Dorsolateral prefrontal cortex (tissue), 120 donors: ENCODE measurements at regions of chr11 and their contacts with region 1.

Region 1: DNA sequence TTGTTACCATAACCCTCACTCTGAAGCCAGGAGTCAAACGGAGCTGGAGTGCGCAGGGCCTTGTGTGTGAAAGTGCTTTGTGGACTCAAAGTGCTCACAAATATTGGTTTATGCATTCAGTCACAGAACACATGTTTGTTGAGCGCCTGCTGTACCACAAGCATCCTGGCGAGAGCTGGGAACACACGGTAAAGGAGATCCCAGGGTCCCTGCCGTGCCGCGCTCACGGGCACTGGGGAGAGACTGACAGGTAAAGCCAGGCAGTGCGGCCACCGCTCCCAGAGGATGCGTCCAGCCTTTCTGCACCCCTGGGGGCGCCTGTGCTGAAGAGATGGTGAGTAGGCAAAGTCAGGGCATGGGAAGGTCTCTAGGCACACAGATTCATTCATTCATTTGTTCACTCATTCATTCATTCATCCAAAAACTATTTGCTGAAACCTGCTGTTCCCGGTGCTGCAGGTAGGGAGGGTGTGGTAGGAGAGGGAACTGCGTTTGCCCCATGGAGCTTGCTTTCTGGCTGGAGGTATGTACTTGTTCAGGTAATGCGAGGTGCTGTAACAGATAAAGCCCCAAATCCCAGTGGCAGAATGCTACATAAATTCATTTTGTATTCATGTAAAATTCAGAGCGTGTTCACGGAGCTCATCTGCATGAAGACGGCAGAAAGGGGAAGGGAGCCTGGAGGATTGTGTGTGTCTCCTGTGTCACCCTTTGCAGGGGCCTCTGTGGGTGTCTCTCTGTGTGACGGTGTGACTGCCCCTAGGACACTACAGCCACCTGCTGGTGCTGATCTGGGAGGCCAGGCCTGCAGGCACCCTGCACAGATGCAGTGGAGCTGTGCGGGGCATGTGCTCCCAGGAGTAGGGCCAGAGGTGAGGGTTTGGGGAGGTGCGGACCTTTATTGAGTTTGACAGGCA is 167.0 kb upstream of the B3GAT1 start:
- DNase-seq: no peak
- H3K4me3 ChIP-seq: no peak overlapping the region
- H3K27ac ChIP-seq: no peak overlapping the region
- H3K27me3 ChIP-seq: no peaks in the 10 kb centered on the region
- CTCF ChIP-seq: peak in 23 of 56 donors; percentile 9 to 48 (median 26)

Region 2: DNA sequence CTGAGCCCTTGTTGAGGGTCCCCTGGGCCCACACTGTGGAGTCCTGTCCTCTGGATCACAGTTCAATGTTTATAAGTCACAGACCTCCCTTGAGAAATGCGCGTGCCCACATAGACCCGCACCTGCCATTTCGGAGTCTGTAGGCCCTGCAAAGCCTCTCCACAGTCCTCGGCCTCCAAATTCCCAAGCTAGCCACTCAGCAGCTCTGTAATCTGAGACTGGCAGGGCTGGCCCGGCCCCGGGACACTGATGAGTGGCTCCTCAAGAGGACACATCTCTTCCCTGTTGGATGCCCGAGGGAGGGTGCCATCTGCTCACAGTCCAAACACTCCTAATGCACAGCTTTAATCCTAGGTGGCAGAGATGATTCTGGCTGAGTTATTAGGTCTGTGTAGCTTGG is 206.1 kb before region 1 on chr11:
- intact Hi-C with region 1: loop called in 1 of 2 experiments (anchors 5 kb)
- DNase-seq: peak in 7 of 10 donors; percentile 58 to 79 (median 63)
- H3K4me3 ChIP-seq: no peak overlapping the region
- H3K27ac ChIP-seq: peak overlapping the region in 37 of 59 donors; percentile 1 to 69 (median 40)
- H3K27me3 ChIP-seq: no peaks in the 10 kb centered on the region
- CTCF ChIP-seq: peak in 4 of 56 donors; percentile 6 to 12 (median 11)